ENCODE measurements at regions of chr10 and their contacts with region 1.

Region 1: DNA sequence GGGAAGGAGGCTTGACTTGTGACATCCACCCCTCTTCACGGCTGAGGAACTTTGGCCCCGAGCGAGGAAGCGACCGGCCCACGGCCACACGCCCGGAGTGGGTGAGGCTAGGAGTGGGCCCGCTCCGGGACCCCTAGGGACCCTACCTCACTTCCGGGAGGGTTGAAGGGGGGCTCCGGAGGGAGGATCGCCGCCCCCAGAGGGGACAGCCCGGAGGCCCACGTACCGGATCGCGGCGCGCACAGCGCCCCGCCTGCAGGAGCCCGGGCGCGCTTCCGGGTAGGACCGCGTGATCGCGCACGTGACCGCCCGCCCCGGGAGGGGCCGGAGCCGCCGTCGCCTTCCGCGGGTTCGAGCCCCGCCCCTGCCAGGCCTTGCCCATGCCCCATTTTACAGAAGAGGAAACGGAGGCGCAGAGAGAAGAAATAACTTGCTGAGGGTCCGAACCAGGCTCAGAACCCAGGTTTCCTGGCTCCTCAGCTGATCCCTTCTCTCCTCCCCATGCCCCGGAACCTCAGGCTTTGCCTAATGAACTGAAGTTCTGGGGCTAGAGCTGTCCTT is at the start of gene HPS1:
- DNase-seq: peak; percentile 57
- H3K4me3 ChIP-seq: peak within 1 kb of the TSS; percentile 43 to 86 (median 70)
- H3K27ac ChIP-seq: peak within 1 kb of the TSS; percentile 73
- H3K4me1 ChIP-seq: peaks cover 6% of the 10 kb centered on the region
- H3K27me3 ChIP-seq: no peaks in the 10 kb centered on the region
- CTCF ChIP-seq: no peak
- POLR2A ChIP-seq: peak; percentile 88
- total RNA-seq, gene HPS1: 60.7 and 67.1 TPM in 2 replicates

Region 2: DNA sequence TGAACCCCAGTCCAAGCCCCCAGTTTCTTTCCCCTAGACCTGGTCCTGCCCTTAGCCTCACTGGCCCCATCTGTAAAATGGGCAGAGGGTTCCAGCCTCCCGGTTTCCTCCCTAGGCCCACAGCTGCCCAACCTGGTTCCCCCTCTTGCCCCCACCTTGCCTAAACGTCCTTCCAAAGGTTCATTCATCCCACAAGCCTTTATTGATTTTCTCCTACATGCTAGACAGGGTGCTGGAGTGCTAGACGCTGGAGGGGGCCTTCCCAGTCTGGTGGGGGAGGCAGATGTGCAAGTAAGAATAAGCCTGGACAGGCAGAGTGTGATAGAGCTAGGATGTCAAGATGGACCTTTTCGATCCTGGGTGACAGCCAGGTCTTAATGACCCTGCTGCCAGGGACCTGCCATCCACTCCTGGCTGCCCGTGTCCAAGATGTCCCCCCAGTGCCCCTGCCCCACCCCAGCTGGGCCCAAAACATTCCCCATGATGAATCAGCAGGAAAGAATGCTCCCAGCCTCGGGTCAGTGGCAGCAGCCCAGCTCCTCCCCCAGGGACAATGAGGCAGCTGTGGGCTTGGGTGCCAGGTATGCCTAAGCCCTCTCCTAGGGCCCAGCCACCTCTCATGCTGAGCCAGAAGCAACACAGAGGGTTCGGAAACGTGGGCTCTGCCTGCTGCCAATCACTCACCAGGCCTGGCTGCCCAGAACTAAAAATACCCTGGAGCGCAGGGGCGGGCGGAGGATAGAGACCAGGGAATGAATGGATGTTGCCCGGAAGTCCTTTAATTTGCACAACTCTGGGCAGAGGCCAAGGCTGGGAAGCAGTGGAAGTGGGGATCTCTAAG is 177.4 kb before region 1 on chr10:
- CTCF ChIA-PET with region 1: no interaction called
- POLR2A ChIA-PET with region 1: no interaction called
- dilution Hi-C with region 1: no loop called
- intact Hi-C with region 1: loop called (anchors 1 kb)
- DNase-seq: peak; percentile 43
- H3K4me3 ChIP-seq: no peak overlapping the region
- H3K27ac ChIP-seq: peak overlapping the region; percentile 15
- H3K4me1 ChIP-seq: peaks cover 17% of the 10 kb centered on the region
- H3K27me3 ChIP-seq: no peaks in the 10 kb centered on the region
- CTCF ChIP-seq: no peak
- POLR2A ChIP-seq: no peak

Region 3: GRCh38 chr10:98414932-98415730 is 31.6 kb before region 1 on chr10 and contains the start of gene PYROXD2:
- CTCF ChIA-PET with region 1: no interaction called
- POLR2A ChIA-PET with region 1: no interaction called
- dilution Hi-C with region 1: no loop called
- intact Hi-C with region 1: loop called (anchors 1 kb)
- DNase-seq: peak; percentile 88
- H3K4me3 ChIP-seq: peak within 1 kb of the TSS; percentile 6 to 65 (median 61)
- H3K27ac ChIP-seq: no peak within 1 kb of the TSS
- H3K4me1 ChIP-seq: peaks cover 14% of the 10 kb centered on the region
- H3K27me3 ChIP-seq: no peaks in the 10 kb centered on the region
- CTCF ChIP-seq: no peak
- POLR2A ChIP-seq: peak; percentile 96
- total RNA-seq, gene PYROXD2: 7.0 TPM in 2 replicates

Region 4: GRCh38 chr10:98460837-98461499 is 14.2 kb after region 1 on chr10:
- CTCF ChIA-PET with region 1: interaction called, 6 read pairs
- POLR2A ChIA-PET with region 1: interaction called, 4 read pairs
- dilution Hi-C with region 1: no loop called
- intact Hi-C with region 1: loop called (anchors 1 kb)
- DNase-seq: peak; percentile 93
- H3K4me3 ChIP-seq: no peak overlapping the region
- H3K27ac ChIP-seq: peak overlapping the region; percentile 98
- H3K4me1 ChIP-seq: peaks cover 15% of the 10 kb centered on the region
- H3K27me3 ChIP-seq: no peaks in the 10 kb centered on the region
- CTCF ChIP-seq: no peak
- POLR2A ChIP-seq: no peak

Measured in endothelial cell of umbilical vein (primary cell).